CD8-positive, alpha-beta T cell (primary cell): ENCODE measurements at regions of chr1 and their contacts with region 1.

Region 1: GRCh38 chr1:32335790-32336590 is at the start of gene MARCKSL1:
- DNase-seq: peak; percentile 75 to 94 (median 86)
- ATAC-seq: peak; percentile 70
- H3K4me3 ChIP-seq: peak within 1 kb of the TSS; percentile 45 to 50
- H3K4me3 Mint-ChIP-seq: peak within 1 kb of the TSS; percentile 83
- H3K27ac ChIP-seq: peak within 1 kb of the TSS in 1 of 2 experiments; percentile 22
- H3K27ac Mint-ChIP-seq: peak within 1 kb of the TSS; percentile 77
- H3K4me1 ChIP-seq: peaks cover 27% of the 10 kb centered on the region
- H3K4me1 Mint-ChIP-seq: peaks cover 35% of the 10 kb centered on the region
- H3K27me3 ChIP-seq: no peaks in the 10 kb centered on the region
- H3K27me3 Mint-ChIP-seq: no peaks in the 10 kb centered on the region
- CTCF ChIP-seq: no peak
- total RNA-seq, gene MARCKSL1: 30.5 to 30.7 TPM

Region 2: GRCh38 chr1:32163405-32163804 is 172.6 kb before region 1 on chr1:
- CTCF ChIA-PET with region 1: no interaction called
- POLR2A ChIA-PET with region 1: no interaction called
- intact Hi-C with region 1: no loop called
- DNase-seq: no peak
- ATAC-seq: no peak
- H3K4me3 ChIP-seq: no peak overlapping the region
- H3K4me3 Mint-ChIP-seq: no peak overlapping the region
- H3K27ac ChIP-seq: no peak overlapping the region
- H3K27ac Mint-ChIP-seq: no peak overlapping the region
- H3K4me1 ChIP-seq: no peaks in the 10 kb centered on the region
- H3K4me1 Mint-ChIP-seq: no peaks in the 10 kb centered on the region
- H3K27me3 ChIP-seq: no peaks in the 10 kb centered on the region
- H3K27me3 Mint-ChIP-seq: no peaks in the 10 kb centered on the region
- CTCF ChIP-seq: no peak

Region 3: DNA sequence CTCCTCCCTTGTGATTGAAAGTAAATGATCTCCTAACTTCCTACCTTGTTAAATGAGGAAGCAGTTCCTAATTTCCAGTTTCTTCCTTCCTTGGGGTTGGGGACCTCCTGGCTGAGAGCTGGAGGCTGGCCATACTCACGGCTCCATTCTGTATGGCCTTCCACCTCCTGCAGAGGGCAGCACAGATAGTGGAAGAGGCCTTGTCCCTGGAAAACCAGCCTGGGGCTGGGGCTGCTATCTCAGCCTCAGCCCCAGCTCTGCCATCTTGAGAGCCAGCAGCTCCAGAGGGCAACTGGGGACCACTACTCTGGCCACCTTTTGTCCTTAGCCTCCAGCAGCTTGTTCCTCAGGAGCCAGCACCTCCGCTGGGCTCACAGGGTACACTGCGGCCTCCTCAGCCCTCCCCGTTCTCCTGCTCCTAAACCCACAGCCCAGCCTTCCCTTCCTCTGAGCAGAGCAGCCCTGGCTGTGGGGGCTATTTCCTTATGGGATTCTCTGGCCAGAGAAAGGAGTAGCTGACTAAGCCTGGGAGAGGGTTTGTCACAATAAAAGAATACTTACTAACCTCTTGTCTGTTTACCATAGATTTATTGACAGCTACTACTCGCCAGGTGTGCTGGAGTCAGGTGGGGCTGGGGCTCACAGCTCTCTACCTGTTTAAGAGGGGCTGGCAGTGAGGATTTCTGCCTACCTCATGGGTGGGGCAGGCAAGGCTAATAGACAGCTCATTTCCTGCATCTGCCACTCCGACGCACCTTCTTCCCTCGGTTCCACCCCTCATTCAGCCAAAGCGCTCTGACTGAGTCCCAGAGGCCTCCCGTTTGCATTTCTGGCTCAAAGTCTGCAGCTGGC is 120.1 kb before region 1 on chr1:
- CTCF ChIA-PET with region 1: interaction called, 8 read pairs
- POLR2A ChIA-PET with region 1: interaction called, 10 read pairs
- intact Hi-C with region 1: loop called in 1 of 2 experiments (anchors 5 kb)
- DNase-seq: peak in 8 of 9 experiments; percentile 16 to 74 (median 60)
- ATAC-seq: peak; percentile 97
- H3K4me3 ChIP-seq: no peak overlapping the region
- H3K4me3 Mint-ChIP-seq: no peak overlapping the region
- H3K27ac ChIP-seq: no peak overlapping the region
- H3K27ac Mint-ChIP-seq: peak overlapping the region; percentile 67
- H3K4me1 ChIP-seq: peaks cover 10% of the 10 kb centered on the region
- H3K4me1 Mint-ChIP-seq: peaks cover 14% of the 10 kb centered on the region
- H3K27me3 ChIP-seq: no peaks in the 10 kb centered on the region
- H3K27me3 Mint-ChIP-seq: no peaks in the 10 kb centered on the region
- CTCF ChIP-seq: peak; percentile 66

Region 4: GRCh38 chr1:32255072-32256071 is 80.6 kb before region 1 on chr1:
- CTCF ChIA-PET with region 1: interaction called, 21 read pairs
- POLR2A ChIA-PET with region 1: interaction called, 51 read pairs
- intact Hi-C with region 1: no loop called
- DNase-seq: peak in 3 of 9 experiments; percentile 34 to 58 (median 35)
- ATAC-seq: peak; percentile 13
- H3K4me3 ChIP-seq: peak overlapping the region; percentile 45 to 84
- H3K4me3 Mint-ChIP-seq: peak overlapping the region; percentile 87
- H3K27ac ChIP-seq: peak overlapping the region; percentile 38 to 93
- H3K27ac Mint-ChIP-seq: peak overlapping the region; percentile 99
- H3K4me1 ChIP-seq: peaks cover 44% of the 10 kb centered on the region
- H3K4me1 Mint-ChIP-seq: peaks cover 55% of the 10 kb centered on the region
- H3K27me3 ChIP-seq: no peaks in the 10 kb centered on the region
- H3K27me3 Mint-ChIP-seq: no peaks in the 10 kb centered on the region
- CTCF ChIP-seq: no peak

Region 5: DNA sequence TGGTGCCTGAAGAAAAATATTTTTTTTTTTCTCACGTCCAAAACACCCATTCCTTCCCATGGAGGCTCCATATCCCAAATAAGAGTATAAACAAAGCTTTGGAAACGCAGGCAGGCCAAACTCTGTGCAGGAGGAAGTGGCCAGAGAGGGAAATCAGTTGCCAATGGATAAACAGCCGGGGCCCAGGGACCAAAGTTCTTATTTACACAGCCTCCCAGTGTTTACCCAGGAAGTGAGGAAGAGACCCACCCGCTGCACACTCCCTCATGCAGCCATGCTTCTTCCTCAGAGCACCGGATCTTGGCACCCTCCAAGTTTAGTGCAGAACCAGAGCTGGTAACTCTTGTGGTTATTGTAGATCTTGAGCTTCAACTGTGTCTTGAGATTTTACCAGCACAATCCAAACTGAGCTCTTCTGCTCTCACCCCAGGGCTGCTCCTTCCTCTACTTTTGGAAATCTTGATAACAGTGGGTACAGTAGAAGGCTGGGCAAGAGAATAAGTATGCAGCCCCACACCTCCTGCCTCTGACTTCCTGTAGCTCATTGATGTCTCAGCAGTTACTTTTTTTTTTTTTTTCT is 14.2 kb before region 1 on chr1:
- CTCF ChIA-PET with region 1: interaction called, 8 read pairs
- POLR2A ChIA-PET with region 1: interaction called, 12 read pairs
- intact Hi-C with region 1: no loop called
- DNase-seq: peak in 7 of 9 experiments; percentile 11 to 72 (median 43)
- ATAC-seq: peak; percentile 87
- H3K4me3 ChIP-seq: peak overlapping the region in 1 of 2 experiments; percentile 6
- H3K4me3 Mint-ChIP-seq: peak overlapping the region; percentile 56
- H3K27ac ChIP-seq: peak overlapping the region; percentile 29 to 41
- H3K27ac Mint-ChIP-seq: peak overlapping the region; percentile 81
- H3K4me1 ChIP-seq: peaks cover 38% of the 10 kb centered on the region
- H3K4me1 Mint-ChIP-seq: peaks cover 38% of the 10 kb centered on the region
- H3K27me3 ChIP-seq: no peaks in the 10 kb centered on the region
- H3K27me3 Mint-ChIP-seq: no peaks in the 10 kb centered on the region
- CTCF ChIP-seq: no peak

Region 6: GRCh38 chr1:32372149-32372756 is 36.3 kb after region 1 on chr1:
- CTCF ChIA-PET with region 1: interaction called, 13 read pairs
- POLR2A ChIA-PET with region 1: interaction called, 11 read pairs
- intact Hi-C with region 1: loop called (anchors 1 kb)
- DNase-seq: peak in 8 of 9 experiments; percentile 27 to 88 (median 67)
- ATAC-seq: peak; percentile 93
- H3K4me3 ChIP-seq: no peak overlapping the region
- H3K4me3 Mint-ChIP-seq: no peak overlapping the region
- H3K27ac ChIP-seq: peak overlapping the region in 1 of 2 experiments; percentile 11
- H3K27ac Mint-ChIP-seq: peak overlapping the region; percentile 78
- H3K4me1 ChIP-seq: peaks cover 11% of the 10 kb centered on the region
- H3K4me1 Mint-ChIP-seq: peaks cover 14% of the 10 kb centered on the region
- H3K27me3 ChIP-seq: no peaks in the 10 kb centered on the region
- H3K27me3 Mint-ChIP-seq: no peaks in the 10 kb centered on the region
- CTCF ChIP-seq: no peak

Region 7: DNA sequence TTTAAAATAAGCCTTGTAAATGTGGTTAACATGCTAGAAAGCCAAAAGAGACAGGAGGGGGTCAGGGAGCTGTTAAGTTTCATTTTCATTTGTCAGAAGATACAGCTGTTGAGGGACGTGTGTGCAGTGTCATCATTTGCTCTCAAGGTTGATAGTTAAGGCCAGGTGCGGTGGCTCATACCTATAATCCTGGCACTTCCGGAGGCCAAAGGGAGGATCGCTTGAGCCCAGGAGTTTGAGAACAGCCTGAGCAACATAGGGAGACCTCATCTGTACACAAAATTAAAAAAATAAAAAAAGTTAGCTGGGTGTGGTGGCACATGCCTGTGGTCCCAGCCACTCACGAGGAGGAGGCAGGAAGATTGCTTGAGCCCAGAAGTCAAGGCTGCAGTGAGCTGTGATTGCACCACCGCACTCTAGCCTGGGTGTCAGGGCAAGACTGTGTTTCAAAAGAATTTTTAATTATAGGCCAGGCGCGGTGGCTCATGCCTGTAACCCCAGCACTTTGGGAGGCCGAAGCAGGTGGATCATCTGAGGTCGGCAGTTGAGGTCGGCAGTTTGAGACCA is 291.7 kb after region 1 on chr1:
- CTCF ChIA-PET with region 1: no interaction called
- POLR2A ChIA-PET with region 1: no interaction called
- intact Hi-C with region 1: no loop called
- DNase-seq: peak in 4 of 9 experiments; percentile 25 to 76 (median 44)
- ATAC-seq: peak; percentile 73
- H3K4me3 ChIP-seq: peak overlapping the region in 1 of 2 experiments; percentile 37
- H3K4me3 Mint-ChIP-seq: peak overlapping the region; percentile 22
- H3K27ac ChIP-seq: peak overlapping the region; percentile 36 to 72
- H3K27ac Mint-ChIP-seq: peak overlapping the region; percentile 71
- H3K4me1 ChIP-seq: peaks cover 21% of the 10 kb centered on the region
- H3K4me1 Mint-ChIP-seq: peaks cover 28% of the 10 kb centered on the region
- H3K27me3 ChIP-seq: no peaks in the 10 kb centered on the region
- H3K27me3 Mint-ChIP-seq: no peaks in the 10 kb centered on the region
- CTCF ChIP-seq: no peak

Region 8: GRCh38 chr1:32650752-32651460 is 314.9 kb after region 1 on chr1 and contains the start of gene RBBP4:
- CTCF ChIA-PET with region 1: no interaction called
- POLR2A ChIA-PET with region 1: interaction called, 4 read pairs
- intact Hi-C with region 1: loop called in 1 of 2 experiments (anchors 2 kb)
- DNase-seq: peak; percentile 96 to 100 (median 99)
- ATAC-seq: peak; percentile 83
- H3K4me3 ChIP-seq: peak within 1 kb of the TSS; percentile 82 to 97
- H3K4me3 Mint-ChIP-seq: peak within 1 kb of the TSS; percentile 93
- H3K27ac ChIP-seq: peak within 1 kb of the TSS; percentile 98 to 99
- H3K27ac Mint-ChIP-seq: peak within 1 kb of the TSS; percentile 99
- H3K4me1 ChIP-seq: peaks cover 51% of the 10 kb centered on the region
- H3K4me1 Mint-ChIP-seq: peaks cover 60% of the 10 kb centered on the region
- H3K27me3 ChIP-seq: no peaks in the 10 kb centered on the region
- H3K27me3 Mint-ChIP-seq: no peaks in the 10 kb centered on the region
- CTCF ChIP-seq: no peak
- total RNA-seq, gene RBBP4: 109 to 121 TPM